SK-N-SH (cell line): ENCODE measurements at regions of chr3 and their contacts with region 1.

Region 1: DNA sequence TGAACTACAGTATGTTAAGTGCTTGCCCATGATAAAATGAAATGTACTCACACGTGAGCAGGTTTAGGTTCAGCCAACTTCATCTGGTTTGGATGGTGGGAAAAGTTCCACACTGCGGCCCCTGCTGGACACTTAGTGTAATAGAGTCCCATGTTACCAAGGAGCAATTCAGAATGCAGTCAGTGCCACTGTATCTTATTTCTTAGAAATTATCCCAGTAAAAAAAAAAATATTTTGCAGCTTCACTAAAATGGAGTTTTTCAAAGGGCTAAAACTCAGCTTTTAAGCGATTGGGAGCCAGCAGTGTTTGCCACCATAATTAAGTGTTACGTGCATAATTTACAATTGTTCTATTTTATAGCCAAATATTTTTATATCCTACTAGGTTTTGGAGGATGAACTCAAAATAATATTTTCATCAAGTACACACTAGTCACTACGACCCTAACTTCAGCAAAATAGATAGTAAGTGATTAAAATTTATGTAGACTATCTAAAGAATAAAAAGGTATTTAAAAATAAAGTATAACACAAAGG is 371.7 kb upstream of the GBE1 start:
- DNase-seq: peak; percentile 50
- H3K4me3 ChIP-seq: no peak overlapping the region; a peak in 1 of 4 replicates
- H3K27ac ChIP-seq: no peak overlapping the region
- H3K4me1 ChIP-seq: no peaks in the 10 kb centered on the region
- H3K27me3 ChIP-seq: no peaks in the 10 kb centered on the region
- CTCF ChIP-seq: peak; percentile 89
- EP300 ChIP-seq: no peak
- RAD21 ChIP-seq: peak; percentile 74

Region 2: GRCh38 chr3:81871358-81872155 is 261.6 kb before region 1 on chr3:
- CTCF ChIA-PET with region 1: interaction called, 30 read pairs
- POLR2A ChIA-PET with region 1: no interaction called
- DNase-seq: peak; percentile 5
- H3K4me3 ChIP-seq: no peak overlapping the region; a peak in 1 of 4 replicates
- H3K27ac ChIP-seq: no peak overlapping the region
- H3K4me1 ChIP-seq: no peaks in the 10 kb centered on the region
- H3K27me3 ChIP-seq: no peaks in the 10 kb centered on the region
- CTCF ChIP-seq: peak; percentile 49
- EP300 ChIP-seq: no peak
- RAD21 ChIP-seq: peak; percentile 68

Region 3: GRCh38 chr3:81910244-81910852 is 222.8 kb before region 1 on chr3:
- CTCF ChIA-PET with region 1: interaction called, 13 read pairs
- POLR2A ChIA-PET with region 1: no interaction called
- DNase-seq: peak; percentile 25
- H3K4me3 ChIP-seq: peak overlapping the region in 1 of 2 experiments; percentile 12; a peak in 1 of 4 replicates
- H3K27ac ChIP-seq: no peak overlapping the region
- H3K4me1 ChIP-seq: 0 out of 4 replicates have a peak, but pooled peaks cover 0 to 4% of the 10 kb centered on the region in 2 experiments
- H3K27me3 ChIP-seq: no peaks in the 10 kb centered on the region
- CTCF ChIP-seq: peak; percentile 88
- EP300 ChIP-seq: no peak
- RAD21 ChIP-seq: peak; percentile 66

Region 4: DNA sequence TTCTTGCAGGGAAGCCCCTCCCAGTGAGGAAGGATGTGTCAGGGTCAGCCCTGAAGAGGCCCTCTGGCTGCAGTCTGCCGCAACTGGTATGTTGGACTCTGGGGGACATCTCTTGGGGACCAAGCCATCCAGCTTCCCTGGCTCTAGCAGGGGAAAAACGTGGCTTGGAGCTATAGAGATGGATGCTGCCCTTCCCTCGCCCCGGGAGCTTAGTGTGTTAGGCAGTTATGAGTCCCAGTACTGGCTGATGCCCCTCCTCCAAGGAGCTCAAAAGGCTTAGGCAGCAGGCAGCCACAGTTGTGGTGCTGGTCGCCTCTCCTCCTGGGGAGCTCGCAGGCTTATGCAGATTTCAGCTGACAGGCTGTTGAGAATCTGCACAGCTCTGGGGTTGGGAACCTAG is 18.5 kb before region 1 on chr3:
- CTCF ChIA-PET with region 1: interaction called, 14 read pairs
- POLR2A ChIA-PET with region 1: no interaction called
- DNase-seq: no peak
- H3K4me3 ChIP-seq: no peak overlapping the region
- H3K27ac ChIP-seq: no peak overlapping the region
- H3K4me1 ChIP-seq: no peaks in the 10 kb centered on the region
- H3K27me3 ChIP-seq: no peaks in the 10 kb centered on the region
- CTCF ChIP-seq: no peak
- EP300 ChIP-seq: no peak
- RAD21 ChIP-seq: no peak

Region 5: GRCh38 chr3:82143661-82144412 is 10.7 kb after region 1 on chr3:
- CTCF ChIA-PET with region 1: interaction called, 11 read pairs
- POLR2A ChIA-PET with region 1: no interaction called
- DNase-seq: no peak
- H3K4me3 ChIP-seq: no peak overlapping the region
- H3K27ac ChIP-seq: no peak overlapping the region
- H3K4me1 ChIP-seq: no peaks in the 10 kb centered on the region
- H3K27me3 ChIP-seq: no peaks in the 10 kb centered on the region
- CTCF ChIP-seq: no peak
- EP300 ChIP-seq: no peak
- RAD21 ChIP-seq: no peak